Activated CD4-positive, alpha-beta memory T cell treated with anti-CD3 and anti-CD28 coated beads, Interleukin-2, amount 10 ng/mL, durations not matched to agents 7 days and 5 days (primary cell): ENCODE measurements at regions of chr3 and their contacts with region 1.

Region 1: DNA sequence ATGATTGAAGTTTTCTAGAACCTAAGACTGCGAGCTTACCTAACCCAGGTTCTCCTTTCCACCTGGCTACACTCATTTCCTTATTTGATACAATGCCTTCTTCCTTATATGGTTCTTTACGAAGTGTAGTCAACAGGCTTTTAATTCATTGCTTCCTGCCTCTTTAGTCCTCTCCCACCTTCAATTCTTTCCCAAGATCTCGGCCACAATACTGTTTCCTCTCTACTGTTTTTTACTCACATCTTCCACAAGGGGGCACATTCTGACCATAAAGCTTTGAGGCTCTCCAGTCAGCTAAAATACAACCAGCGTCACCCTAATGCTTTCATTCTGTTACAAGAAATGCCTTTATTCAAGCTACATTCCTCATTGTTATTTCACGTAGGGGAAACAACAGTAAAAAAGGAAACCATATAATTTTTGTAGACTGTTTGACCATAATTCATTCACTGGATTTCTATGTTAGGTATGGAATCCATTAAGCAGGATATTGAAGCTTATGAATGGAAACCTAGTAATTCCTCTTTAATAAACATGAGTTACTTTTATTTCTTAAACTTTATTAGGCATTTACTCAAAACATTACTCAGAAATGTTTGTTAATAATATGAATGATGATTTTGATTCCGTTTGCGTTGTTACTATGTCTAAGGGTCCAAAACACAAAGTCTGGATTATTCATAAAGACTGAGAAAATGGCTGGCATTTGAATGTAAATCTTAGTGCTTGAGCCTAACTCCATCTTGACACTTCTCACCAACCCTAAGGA is 29.5 kb upstream of the VEPH1 start:
- DNase-seq: no peak
- H3K4me3 Mint-ChIP-seq: no peak overlapping the region
- H3K27ac Mint-ChIP-seq: no peak overlapping the region
- H3K4me1 Mint-ChIP-seq: no peaks in the 10 kb centered on the region
- H3K27me3 Mint-ChIP-seq: no peaks in the 10 kb centered on the region

Region 2: DNA sequence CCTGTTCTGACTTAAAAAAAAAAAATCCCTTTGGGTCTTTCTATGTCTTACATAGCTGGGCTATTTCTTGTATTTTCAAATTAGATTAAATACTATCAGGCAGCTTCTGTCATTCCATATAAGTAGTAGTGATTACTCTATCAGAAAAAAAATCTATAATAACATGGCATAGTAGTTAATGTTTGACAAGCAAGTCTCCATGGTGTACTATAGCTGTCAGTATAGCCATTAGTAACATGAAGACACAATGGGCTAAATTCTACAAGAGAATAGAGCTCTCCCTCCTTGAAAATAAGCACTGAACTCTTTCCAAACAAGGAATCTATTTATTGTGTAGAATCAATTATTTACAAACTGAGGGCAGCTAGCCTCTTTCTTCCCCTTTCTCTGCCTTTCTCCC is 10.1 kb before region 1 on chr3:
- CTCF ChIA-PET with region 1: interaction called, 12 read pairs
- POLR2A ChIA-PET with region 1: no interaction called
- DNase-seq: no peak
- H3K4me3 Mint-ChIP-seq: no peak overlapping the region
- H3K27ac Mint-ChIP-seq: no peak overlapping the region
- H3K4me1 Mint-ChIP-seq: no peaks in the 10 kb centered on the region
- H3K27me3 Mint-ChIP-seq: no peaks in the 10 kb centered on the region